HEK293 (cell line): ENCODE measurements at regions of chr3 and their contacts with region 1.

Region 1: GRCh38 chr3:51498876-51499738 is 708 bp downstream of the DCAF1 start:
- H3K4me3 ChIP-seq: peak overlapping the region; percentile 95
- H3K27ac ChIP-seq: peak overlapping the region; percentile 63
- H3K4me1 ChIP-seq: no peaks in the 10 kb centered on the region
- CTCF ChIP-seq: no peak

Region 2: GRCh38 chr3:50350527-50351322 is 1148.4 kb before region 1 on chr3 and contains the starts of genes CYB561D2 and NPRL2:
- CTCF ChIA-PET with region 1: no interaction called
- POLR2A ChIA-PET with region 1: interaction called, 10 read pairs
- H3K4me3 ChIP-seq: peak within 1 kb of the TSS; percentile 72
- H3K27ac ChIP-seq: peak within 1 kb of the TSS; percentile 63
- H3K4me1 ChIP-seq: peaks cover 4% of the 10 kb centered on the region; the same call in 1 of the 2 replicates
- CTCF ChIP-seq: no peak

Region 3: GRCh38 chr3:51408813-51409212 is 90.3 kb before region 1 on chr3:
- CTCF ChIA-PET with region 1: no interaction called
- POLR2A ChIA-PET with region 1: interaction called, 10 read pairs
- H3K4me3 ChIP-seq: no peak overlapping the region
- H3K27ac ChIP-seq: no peak overlapping the region
- H3K4me1 ChIP-seq: no peaks in the 10 kb centered on the region
- CTCF ChIP-seq: no peak

Region 4: GRCh38 chr3:51637941-51638471 is 138.9 kb after region 1 on chr3:
- CTCF ChIA-PET with region 1: interaction called, 38 read pairs
- POLR2A ChIA-PET with region 1: no interaction called
- H3K4me3 ChIP-seq: no peak overlapping the region
- H3K27ac ChIP-seq: no peak overlapping the region
- H3K4me1 ChIP-seq: no peaks in the 10 kb centered on the region
- CTCF ChIP-seq: peak; percentile 89

Region 5: GRCh38 chr3:51682079-51682478 is 183.0 kb after region 1 on chr3:
- CTCF ChIA-PET with region 1: interaction called, 71 read pairs
- POLR2A ChIA-PET with region 1: interaction called, 6 read pairs
- H3K4me3 ChIP-seq: no peak overlapping the region
- H3K27ac ChIP-seq: no peak overlapping the region
- H3K4me1 ChIP-seq: no peaks in the 10 kb centered on the region
- CTCF ChIP-seq: 0 out of 2 replicates have a peak, but pooled peaks have one; percentile 58